Adrenal gland (tissue), 19 donors: ENCODE measurements at regions of chrX and their contacts with region 1.

Region 1: DNA sequence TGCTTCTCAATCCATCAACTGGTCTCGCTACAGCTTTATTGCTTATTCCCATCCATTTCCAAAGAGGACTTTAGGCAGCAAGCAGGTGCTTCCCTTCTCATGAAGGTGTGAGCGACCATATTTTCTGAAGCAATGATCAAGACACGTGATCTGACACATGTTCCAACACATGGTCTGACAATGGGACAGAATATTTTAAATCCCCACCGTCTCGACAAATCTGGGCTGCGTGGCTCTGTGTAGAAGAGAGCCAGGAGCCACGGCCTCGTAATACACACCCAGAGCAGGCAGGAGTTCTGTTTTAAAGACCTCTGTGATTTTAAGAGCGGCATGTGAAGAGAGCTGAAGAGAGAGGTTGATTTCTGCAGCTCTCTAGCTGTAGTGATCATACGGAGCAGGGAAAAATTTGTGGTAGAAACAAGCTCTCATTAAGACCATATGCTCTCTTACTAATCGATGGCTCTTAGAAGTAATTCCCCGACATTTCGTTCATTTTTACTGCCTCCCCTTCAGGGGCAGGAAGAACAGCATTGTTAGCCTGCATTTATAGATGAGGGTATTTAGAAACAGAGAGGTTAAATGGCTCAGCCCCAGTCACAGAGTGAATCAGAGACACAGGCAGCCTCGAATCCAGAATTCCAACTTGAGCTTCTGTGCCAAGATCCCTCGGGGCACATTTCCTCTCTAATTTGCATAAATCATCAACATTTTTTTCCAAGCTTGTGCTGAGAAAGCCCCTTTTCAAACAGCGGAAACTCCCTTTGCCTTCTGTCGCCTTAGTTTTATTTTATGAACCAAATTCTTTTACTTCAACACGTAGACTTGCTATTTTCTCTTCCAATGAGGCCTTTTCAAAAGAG is 91.0 kb upstream of the BCOR start:
- DNase-seq: no peak
- H3K4me3 ChIP-seq: no peak overlapping the region
- H3K27ac ChIP-seq: no peak overlapping the region
- H3K4me1 ChIP-seq: no peaks in the 10 kb centered on the region
- H3K27me3 ChIP-seq: no peaks in the 10 kb centered on the region
- CTCF ChIP-seq: no peak
- POLR2A ChIP-seq: no peak

Region 2: DNA sequence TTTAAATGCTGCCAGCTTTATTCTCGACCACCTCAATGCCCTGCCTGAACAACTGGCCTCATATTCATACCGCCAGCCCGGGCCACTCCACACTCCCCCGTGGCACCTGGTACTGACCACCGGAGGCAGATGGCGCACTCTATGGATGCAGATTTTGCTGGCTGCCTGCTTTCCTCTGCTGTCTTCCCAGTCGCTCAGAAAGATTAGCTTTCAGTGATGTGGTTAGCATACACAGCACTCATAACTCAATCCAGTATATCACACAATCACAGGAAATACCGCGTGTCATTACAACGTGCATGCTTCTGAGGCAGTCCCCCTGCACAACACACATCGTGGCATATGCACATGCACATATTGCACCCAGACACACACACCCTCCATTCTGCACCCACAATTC is 56.2 kb after region 1 on chrX:
- intact Hi-C with region 1: loop called in 1 of 2 experiments (anchors 10 kb)
- DNase-seq: no peak
- H3K4me3 ChIP-seq: no peak overlapping the region
- H3K27ac ChIP-seq: peak overlapping the region in 1 of 5 donors; percentile 59
- H3K4me1 ChIP-seq: no peaks in the 10 kb centered on the region
- H3K27me3 ChIP-seq: peaks cover 3% of the 10 kb centered on the region
- CTCF ChIP-seq: no peak
- POLR2A ChIP-seq: no peak